Activated CD4-positive, alpha-beta memory T cell treated with anti-CD3 and anti-CD28 coated beads for 36 hours (primary cell): ENCODE measurements at regions of chr14 and their contacts with region 1.

Region 1: DNA sequence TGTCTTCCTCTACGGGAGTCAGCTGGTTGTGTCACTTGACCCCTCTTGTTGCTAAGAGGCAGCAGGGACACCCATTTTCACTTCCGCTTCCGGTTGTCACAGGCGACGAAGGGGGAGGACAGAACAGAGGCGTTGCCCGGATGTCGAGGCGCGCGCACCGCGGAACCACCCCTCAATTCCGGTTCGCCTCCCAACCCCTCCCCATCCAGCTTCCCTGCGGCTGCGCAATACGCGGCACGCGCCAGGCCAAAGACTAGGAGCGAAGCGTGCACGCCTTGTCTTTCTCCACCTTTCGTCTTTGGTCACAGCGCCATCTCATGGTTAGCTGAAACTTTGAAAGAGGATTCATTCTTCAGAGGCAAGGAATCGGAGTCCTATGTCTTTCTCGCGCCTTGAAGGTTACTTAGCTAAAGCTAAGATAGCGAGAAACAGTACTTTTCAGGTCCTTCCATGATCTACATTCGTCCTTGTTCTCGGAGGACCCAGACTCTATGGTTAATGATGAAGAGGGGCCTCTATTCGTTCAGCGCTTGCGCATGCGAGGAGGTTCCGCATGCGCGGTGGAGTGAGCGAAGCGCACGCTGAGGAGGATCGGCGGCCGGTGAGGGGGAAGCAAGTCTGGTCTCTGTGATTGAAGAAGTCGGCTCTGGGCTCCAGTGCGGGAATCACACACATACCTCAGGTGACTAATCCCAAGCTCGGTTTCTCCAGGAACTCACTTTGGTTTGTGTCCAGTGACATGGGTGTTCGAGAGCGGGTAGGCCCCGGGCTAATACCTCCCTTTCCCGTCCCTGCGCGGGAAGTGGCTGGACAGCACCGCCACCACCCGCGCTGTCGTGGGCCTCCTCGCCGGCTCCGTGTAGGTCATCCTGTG is at the starts of genes ATP6V1D and EIF2S1:
- DNase-seq: peak; percentile 100
- H3K4me3 Mint-ChIP-seq: peak within 1 kb of the TSS; percentile 99
- H3K27ac Mint-ChIP-seq: peak within 1 kb of the TSS; percentile 98
- H3K4me1 Mint-ChIP-seq: peaks cover 62% of the 10 kb centered on the region
- H3K27me3 Mint-ChIP-seq: peaks cover 2% of the 10 kb centered on the region
- total RNA-seq, gene ATP6V1D: 28.3 to 31.7 TPM
- total RNA-seq, gene EIF2S1: 238 to 240 TPM

Region 2: DNA sequence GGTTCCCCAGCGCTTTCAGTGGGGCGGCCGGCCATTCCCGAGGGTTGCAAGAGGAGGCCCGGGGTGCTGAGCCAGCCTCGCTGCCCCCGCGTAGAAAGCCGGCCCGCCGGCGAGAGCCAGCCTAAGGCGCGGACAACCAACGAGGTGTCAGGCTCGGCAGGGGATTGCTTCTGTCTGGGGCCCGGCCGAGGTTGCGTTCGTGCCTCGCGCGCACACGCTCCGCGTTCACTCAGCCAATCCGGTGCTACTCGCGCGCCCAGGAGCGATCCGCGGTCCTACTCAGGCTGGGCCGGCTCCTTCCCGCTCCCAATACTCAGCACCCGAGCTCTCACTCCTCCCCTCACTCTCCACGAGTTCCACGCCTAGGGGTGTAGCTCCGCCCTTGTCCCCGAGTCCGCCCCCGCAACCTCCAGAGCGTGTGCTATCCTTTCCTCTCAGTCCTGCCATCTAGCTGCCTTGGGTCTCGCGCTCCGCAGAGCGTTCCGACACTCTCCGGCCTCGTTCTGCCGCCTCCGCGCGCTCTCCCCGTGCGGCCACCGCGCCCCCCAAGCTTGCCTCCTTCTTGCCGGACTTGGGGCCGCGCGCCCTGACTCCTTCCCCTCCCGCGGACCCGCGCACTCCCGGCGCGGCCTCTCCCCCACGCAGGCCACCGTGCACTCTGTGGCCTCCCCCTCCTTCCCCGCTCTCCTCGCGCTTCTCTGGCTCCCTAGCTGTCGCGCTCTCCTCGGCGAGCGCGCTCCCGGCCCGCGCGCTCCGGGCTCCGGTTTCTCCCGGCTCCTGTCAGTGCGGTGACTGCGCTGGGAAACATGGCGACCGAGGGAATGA is 852.1 kb before region 1 on chr14 and contains the start of gene GPHN:
- CTCF ChIA-PET with region 1: interaction called, 8 read pairs
- POLR2A ChIA-PET with region 1: no interaction called
- intact Hi-C with region 1: loop called (anchors 2 kb)
- DNase-seq: peak; percentile 95
- H3K4me3 Mint-ChIP-seq: peak within 1 kb of the TSS; percentile 89
- H3K27ac Mint-ChIP-seq: peak within 1 kb of the TSS; percentile 92
- H3K4me1 Mint-ChIP-seq: peaks cover 33% of the 10 kb centered on the region
- H3K27me3 Mint-ChIP-seq: peaks cover 4% of the 10 kb centered on the region
- total RNA-seq, gene GPHN: 19.5 to 23.1 TPM

Region 3: DNA sequence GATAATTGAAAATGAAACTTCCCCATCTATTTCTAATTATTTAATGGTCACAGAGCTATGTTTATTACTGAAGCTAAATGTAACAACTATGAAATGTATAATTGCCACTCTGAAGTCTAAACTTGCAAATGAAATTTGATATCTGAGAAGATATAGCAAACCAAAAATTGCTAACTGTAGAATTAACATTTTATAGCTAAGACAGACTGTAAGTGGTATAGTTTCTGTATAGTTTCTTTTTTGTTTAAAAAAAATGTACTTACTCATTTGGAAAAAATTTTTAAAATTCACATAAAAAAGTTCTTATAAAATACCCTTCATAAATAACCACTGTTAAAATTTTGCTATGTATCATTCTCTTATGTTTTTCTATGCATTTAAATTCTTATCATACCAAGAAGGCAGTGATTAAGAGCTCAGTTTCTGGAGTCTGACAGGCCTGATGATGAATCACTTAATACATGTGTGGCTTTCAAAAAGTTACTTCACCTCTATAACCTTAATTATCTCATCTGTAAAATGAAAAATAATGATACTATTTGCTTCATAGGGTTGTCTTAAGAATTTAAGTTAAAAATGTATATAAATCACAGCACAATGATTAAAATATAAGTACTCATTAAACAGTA is 385.5 kb before region 1 on chr14:
- CTCF ChIA-PET with region 1: no interaction called
- POLR2A ChIA-PET with region 1: no interaction called
- intact Hi-C with region 1: no loop called
- DNase-seq: no peak
- H3K4me3 Mint-ChIP-seq: no peak overlapping the region
- H3K27ac Mint-ChIP-seq: no peak overlapping the region
- H3K4me1 Mint-ChIP-seq: peaks cover 4% of the 10 kb centered on the region
- H3K27me3 Mint-ChIP-seq: no peaks in the 10 kb centered on the region

Region 4: DNA sequence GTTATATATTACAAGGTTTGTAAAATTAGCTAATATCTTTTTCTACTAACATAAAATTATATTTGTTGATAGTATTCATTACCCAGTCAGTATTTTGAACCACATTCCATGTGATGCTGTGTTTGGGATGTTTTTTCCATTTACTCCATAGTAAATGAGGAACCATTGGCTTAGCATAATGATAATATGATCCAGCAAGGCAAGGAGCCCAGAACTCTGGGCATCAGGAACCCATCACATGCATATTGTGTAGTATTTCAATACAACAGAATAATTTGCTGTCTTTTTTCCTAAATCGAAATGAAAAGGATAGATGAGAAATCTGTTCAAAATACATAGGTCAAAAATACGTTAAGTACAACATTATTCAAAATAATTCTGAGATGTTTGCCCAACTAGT is 219.5 kb before region 1 on chr14:
- CTCF ChIA-PET with region 1: no interaction called
- POLR2A ChIA-PET with region 1: no interaction called
- intact Hi-C with region 1: no loop called
- DNase-seq: no peak
- H3K4me3 Mint-ChIP-seq: no peak overlapping the region
- H3K27ac Mint-ChIP-seq: no peak overlapping the region
- H3K4me1 Mint-ChIP-seq: peaks cover 3% of the 10 kb centered on the region
- H3K27me3 Mint-ChIP-seq: no peaks in the 10 kb centered on the region

Region 5: GRCh38 chr14:67240978-67241414 is 119.0 kb before region 1 on chr14:
- CTCF ChIA-PET with region 1: interaction called, 6 read pairs
- POLR2A ChIA-PET with region 1: interaction called, 3 read pairs
- intact Hi-C with region 1: loop called (anchors 1 kb)
- DNase-seq: peak; percentile 96
- H3K4me3 Mint-ChIP-seq: peak overlapping the region; percentile 82
- H3K27ac Mint-ChIP-seq: peak overlapping the region; percentile 83
- H3K4me1 Mint-ChIP-seq: peaks cover 8% of the 10 kb centered on the region
- H3K27me3 Mint-ChIP-seq: no peaks in the 10 kb centered on the region

Region 6: DNA sequence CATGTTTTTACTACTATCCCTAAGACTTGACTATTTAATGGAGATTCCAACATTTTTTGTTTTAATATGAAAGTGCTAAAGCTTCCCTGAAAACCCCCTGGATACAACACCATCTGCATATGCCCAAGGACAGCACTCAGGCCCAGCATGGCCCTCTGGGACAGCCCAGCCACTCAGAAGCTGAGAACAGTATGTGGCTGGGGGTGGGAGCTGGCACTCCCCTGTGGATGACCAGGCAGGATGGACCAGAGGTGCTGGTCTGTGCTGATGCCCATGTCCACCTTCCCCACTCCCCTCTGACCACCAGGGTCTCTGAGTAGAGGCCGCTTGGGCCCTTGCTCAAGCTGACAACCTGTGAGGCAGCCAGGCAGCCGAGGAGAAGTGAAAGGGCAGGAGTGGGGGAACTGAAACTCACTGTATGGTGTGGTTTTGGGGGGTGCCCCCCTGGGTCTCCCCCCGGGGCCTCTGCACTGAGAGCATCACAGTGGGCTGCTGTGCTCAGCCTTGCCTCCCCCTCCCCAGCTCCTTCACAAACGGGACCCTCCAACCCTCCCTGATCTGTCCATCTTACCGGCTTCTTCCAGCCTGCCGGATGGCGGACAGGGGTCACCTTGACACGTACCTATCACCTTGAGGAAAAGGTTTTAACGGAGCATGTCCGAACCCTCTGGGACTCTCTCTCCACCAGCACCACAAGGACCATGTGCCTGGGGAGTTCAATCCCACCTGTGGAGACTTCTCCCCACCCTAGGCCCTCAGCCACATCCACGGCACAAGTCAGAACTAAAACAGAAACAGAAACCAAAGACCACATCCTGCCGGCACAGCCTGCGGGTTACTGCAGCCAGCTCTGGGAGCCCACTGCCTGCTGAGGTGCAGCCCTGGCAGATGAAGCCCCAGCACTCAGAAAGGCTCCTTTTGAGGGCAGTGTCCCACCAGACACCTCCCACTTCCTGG is 128.2 kb after region 1 on chr14 and contains the start of gene TMEM229B:
- CTCF ChIA-PET with region 1: interaction called, 3 read pairs
- POLR2A ChIA-PET with region 1: no interaction called
- intact Hi-C with region 1: loop called (anchors 5 kb)
- DNase-seq: peak; percentile 88
- H3K4me3 Mint-ChIP-seq: peak within 1 kb of the TSS; percentile 71
- H3K27ac Mint-ChIP-seq: peak within 1 kb of the TSS; percentile 80
- H3K4me1 Mint-ChIP-seq: peaks cover 47% of the 10 kb centered on the region
- H3K27me3 Mint-ChIP-seq: peaks cover 1% of the 10 kb centered on the region
- total RNA-seq, gene TMEM229B: 0.93 to 1.1 TPM

Region 7: DNA sequence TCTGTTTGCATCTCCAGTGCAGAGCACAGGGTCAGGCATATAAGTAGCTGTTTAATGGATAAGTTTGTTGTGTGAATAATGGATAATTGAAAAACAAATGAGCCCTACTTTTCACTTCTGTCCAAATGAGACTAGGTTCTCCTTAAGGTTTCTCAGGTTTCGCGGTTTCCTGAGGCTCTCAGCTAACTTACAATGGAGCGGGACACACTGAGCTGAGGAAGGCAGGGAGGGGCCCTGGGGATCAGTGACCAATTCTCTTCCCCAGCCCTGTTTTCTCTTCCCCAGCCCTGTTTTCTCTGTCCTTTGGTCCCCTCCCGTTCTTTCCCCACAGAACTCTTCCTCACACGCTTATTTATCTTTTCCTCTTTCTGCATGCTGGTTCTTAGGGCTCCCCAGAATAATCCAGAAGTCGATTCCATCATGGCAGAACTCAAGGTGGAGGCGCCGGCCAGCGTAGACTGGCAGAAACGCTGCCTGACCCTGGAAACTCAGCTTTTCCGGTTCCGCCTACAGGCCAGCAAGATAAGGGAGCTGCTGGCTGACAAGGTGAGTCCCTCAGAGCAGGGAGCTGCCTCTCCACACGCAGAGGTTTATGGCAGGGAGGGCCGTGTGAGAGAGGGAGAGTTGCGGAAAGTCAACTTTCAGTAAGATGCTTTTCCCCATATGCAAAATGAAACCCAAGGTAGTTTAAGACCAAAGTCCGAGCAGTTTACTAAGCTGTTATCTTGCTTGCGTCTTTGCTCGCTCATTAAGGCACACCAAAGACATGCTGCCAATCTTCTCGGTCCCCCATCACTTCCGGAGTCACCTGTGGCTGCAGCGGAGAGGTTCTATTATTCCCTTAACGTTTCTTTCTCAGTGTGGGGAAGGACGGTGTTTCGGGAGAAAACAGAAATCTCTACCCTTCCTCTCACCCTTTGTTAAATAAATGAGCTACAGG is 181.7 kb after region 1 on chr14:
- CTCF ChIA-PET with region 1: no interaction called
- POLR2A ChIA-PET with region 1: no interaction called
- intact Hi-C with region 1: no loop called
- DNase-seq: peak; percentile 37
- H3K4me3 Mint-ChIP-seq: peak overlapping the region; percentile 50
- H3K27ac Mint-ChIP-seq: no peak overlapping the region
- H3K4me1 Mint-ChIP-seq: peaks cover 5% of the 10 kb centered on the region
- H3K27me3 Mint-ChIP-seq: peaks cover 22% of the 10 kb centered on the region

Region 8: DNA sequence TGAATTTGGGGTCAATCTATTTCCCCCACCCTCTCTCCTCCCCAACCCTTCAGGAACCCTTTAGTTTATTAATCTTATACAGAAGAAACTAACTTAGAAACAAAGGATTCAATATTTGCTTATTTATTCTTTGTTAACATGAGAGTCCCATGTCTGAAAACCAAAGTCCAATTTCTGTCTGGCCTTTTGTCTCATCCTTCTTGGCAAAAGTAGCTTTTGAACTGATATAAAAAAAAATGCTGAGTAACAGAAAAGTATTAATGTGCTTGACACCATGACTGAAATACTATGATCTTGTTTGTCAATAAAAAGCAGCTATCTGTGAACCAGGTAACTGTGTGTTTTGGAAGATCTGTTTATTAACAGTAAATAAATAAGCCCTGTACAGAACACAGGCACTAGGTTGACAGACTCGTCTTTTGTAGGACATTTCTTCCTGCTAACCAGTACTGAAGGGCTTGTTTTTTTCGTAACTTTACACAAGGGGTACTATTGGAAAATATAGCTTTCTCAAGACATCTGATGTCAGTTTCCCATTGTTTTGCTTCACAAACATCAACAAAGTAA is 229.3 kb after region 1 on chr14:
- CTCF ChIA-PET with region 1: no interaction called
- POLR2A ChIA-PET with region 1: no interaction called
- intact Hi-C with region 1: no loop called
- DNase-seq: no peak
- H3K4me3 Mint-ChIP-seq: no peak overlapping the region
- H3K27ac Mint-ChIP-seq: no peak overlapping the region
- H3K4me1 Mint-ChIP-seq: no peaks in the 10 kb centered on the region
- H3K27me3 Mint-ChIP-seq: no peaks in the 10 kb centered on the region

Region 9: DNA sequence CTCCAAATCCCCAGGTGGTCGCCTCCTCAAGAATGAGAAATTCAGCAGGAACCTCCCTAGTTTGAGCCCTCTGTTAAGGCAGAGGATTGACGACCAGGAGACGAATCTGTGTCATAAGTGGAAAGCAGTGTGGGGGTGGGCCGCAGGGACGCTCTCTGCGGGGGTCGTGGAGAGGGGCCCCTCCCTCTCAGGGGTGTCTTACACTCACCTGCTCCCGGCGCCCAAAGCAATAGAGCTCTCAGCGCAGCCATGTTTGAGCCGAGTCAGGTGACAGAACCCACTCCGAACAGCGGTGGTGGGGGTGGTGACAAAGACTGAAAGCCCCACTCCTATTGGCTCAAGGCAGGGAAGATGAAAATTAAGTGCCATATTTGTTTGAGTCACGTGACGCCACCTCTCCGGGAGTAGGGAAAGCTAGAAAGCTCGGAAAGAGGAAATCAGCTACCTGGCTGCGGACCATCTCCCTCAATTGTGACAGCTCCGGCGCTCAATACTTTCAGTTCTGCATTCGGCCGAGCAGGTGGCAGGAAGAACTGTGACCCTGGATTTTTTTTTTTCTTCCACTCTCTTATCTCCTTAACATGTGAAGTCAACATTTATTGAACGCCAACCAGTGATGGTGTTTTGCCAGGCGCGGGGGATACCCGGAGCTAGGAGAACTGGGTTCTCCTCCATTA is 456.5 kb after region 1 on chr14 and contains the start of gene ZFYVE26:
- CTCF ChIA-PET with region 1: no interaction called
- POLR2A ChIA-PET with region 1: no interaction called
- intact Hi-C with region 1: loop called (anchors 5 kb)
- DNase-seq: peak; percentile 95
- H3K4me3 Mint-ChIP-seq: peak within 1 kb of the TSS; percentile 93
- H3K27ac Mint-ChIP-seq: peak within 1 kb of the TSS; percentile 90
- H3K4me1 Mint-ChIP-seq: peaks cover 50% of the 10 kb centered on the region
- H3K27me3 Mint-ChIP-seq: no peaks in the 10 kb centered on the region
- total RNA-seq, gene ZFYVE26: 12.5 to 12.6 TPM